K562 (cell line): ENCODE measurements at regions of chr22 and their contacts with region 1.

Region 1: DNA sequence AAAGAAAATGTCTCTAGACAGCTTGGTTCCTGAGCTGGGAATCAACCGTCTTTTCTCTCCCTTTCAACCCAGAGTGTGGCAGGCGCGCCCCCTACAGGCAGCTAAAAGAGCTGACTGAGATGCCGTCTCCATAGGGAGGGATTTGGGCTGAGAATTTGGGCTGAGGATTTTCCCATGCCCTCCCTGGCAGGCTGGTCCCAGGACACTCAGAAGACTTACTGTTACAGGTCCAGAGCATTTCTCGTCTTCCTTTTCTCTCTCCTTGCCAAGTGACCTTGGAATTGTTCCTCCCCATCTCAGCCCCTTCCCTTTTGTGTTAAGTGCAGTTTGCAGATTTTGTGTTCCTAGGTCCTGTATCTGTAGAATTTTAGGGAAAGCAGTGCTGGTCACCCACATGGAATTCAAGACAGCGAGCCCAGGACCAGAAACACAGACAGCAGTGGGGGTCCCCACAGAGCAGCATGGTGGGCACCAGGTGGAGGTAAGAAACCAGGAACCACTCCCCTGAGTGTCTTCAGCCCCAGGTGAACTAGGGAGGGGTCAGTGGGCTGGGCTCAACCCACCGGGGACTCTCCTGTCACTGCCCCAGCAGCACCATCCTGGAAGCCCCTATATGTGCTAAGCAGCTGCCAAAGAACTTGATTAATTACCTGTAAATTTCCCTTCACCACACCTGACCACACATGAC is 9.9 kb upstream of the IGLL5 start:
- DNase-seq: peak in 3 of 4 experiments; percentile 58 to 99 (median 98)
- ATAC-seq: peak; percentile 90
- H3K4me3 ChIP-seq: no peak overlapping the region
- H3K27ac ChIP-seq: no peak overlapping the region
- H3K4me1 ChIP-seq: peaks cover 0 to 3% of the 10 kb centered on the region in 2 experiments; a peak in 1 of 5 replicates
- H3K27me3 ChIP-seq: peaks cover 0 to 41% of the 10 kb centered on the region in 2 experiments; a peak in 2 of 5 replicates
- CTCF ChIP-seq: no peak
- EP300 ChIP-seq: no peak
- POLR2A ChIP-seq: no peak
- RAD21 ChIP-seq: no peak

Region 2: DNA sequence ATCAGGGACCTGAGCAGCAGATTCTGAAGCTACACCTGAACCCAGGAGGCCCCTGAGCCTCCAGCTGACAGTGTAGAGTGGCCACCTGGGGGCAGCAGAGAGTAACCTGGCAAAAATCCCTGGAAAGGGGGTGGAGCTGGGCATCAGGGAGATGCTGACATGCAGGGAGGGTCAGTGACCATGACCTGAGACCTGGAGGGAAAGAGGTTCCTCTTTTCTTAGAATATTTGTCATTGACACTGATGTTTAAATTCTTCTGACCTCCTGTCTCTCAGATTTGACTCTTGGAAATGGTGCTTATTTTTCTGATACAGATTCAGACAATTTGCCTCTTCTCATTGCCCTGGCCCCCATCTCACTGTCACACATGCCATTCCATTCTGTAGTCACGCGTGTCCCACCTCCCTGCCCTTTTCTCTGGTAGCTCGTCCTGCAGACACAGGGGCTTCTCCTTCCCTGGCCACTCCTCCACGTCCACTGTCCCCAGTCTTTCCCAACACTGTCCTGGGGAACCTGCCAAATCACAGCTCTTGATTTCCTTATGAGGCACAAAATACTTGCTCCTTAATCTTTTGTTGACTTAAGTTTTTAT is 107.3 kb before region 1 on chr22:
- CTCF ChIA-PET with region 1: interaction called, 17 read pairs
- POLR2A ChIA-PET with region 1: interaction called, 4 read pairs
- in situ Hi-C with region 1: no loop called
- intact Hi-C with region 1: loop called (anchors 1 kb)
- DNase-seq: peak; percentile 96 to 100 (median 98)
- ATAC-seq: peak; percentile 94
- H3K4me3 ChIP-seq: no peak overlapping the region
- H3K27ac ChIP-seq: no peak overlapping the region
- H3K4me1 ChIP-seq: no peaks in the 10 kb centered on the region
- H3K27me3 ChIP-seq: peaks cover 0 to 32% of the 10 kb centered on the region in 2 experiments; a peak in 2 of 5 replicates
- CTCF ChIP-seq: peak in 1 of 3 experiments; percentile 100; a peak in 2 of 6 replicates
- EP300 ChIP-seq: peak; percentile 71
- POLR2A ChIP-seq: no peak
- RAD21 ChIP-seq: no peak

Region 3: DNA sequence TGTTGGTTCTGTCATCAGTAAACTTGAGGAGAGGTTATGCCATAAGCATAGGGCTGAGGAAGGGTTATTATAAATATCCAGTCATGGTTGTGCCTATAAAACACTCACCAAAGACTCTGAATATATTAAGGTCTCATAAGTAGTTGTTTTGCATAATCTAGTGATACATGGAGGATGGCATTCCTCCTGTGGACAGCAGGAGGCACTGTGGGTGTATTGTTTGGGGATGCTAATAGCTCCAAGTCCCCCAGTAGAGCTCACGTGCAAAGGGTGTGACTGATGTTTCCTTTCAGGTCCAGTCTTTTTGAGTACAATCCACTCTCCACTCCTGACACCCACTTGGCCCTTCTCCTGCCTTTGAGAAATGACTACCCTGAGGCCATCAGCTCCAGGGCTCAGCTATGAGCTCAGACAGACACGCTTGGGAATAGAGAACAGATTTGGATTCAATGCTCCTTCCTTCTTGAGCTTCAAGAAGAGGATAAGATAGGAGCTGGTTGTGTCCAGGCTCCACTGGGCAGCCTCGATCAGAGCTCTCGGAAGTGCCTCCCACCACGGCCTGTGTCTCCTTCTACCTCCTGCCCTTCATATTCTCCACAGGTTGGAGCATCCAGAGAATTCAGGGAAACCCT is 75.2 kb before region 1 on chr22:
- CTCF ChIA-PET with region 1: interaction called, 251 read pairs
- POLR2A ChIA-PET with region 1: interaction called, 7 read pairs
- in situ Hi-C with region 1: no loop called
- intact Hi-C with region 1: loop called (anchors 1 kb)
- DNase-seq: peak; percentile 84 to 94 (median 91)
- ATAC-seq: peak; percentile 90
- H3K4me3 ChIP-seq: no peak overlapping the region
- H3K27ac ChIP-seq: no peak overlapping the region
- H3K4me1 ChIP-seq: no peaks in the 10 kb centered on the region
- H3K27me3 ChIP-seq: peaks cover 8 to 37% of the 10 kb centered on the region in 2 experiments; a peak in 3 of 5 replicates
- CTCF ChIP-seq: no peak
- EP300 ChIP-seq: no peak
- POLR2A ChIP-seq: no peak
- RAD21 ChIP-seq: no peak

Region 4: DNA sequence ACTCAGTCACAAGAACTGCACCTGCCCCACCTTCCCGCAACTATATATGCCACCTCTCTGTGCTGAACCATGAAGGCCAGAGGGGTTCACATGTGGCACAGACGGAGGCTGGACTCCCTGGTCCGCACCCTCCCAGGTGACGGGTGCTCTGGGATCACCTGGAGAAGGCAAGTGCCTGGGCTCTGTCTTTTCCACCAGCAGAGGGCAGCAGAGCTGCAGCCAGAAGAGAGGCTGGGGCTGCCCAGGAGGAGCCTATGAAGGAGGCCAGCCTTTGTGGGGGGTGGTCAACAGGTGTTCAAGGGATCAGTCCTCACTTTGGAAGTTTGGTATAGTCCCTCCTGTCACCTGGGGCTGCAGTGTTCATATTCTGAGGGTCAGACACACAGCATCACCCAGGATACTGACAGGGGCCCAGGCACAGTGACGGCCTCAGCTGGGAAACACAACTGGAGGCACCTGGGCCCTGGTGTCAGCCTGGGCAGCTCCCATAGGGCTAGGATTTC is 29.3 kb before region 1 on chr22:
- CTCF ChIA-PET with region 1: interaction called, 56 read pairs
- POLR2A ChIA-PET with region 1: interaction called, 7 read pairs
- in situ Hi-C with region 1: no loop called
- intact Hi-C with region 1: loop called (anchors 1 kb)
- DNase-seq: peak; percentile 94 to 100 (median 98)
- ATAC-seq: peak; percentile 98
- H3K4me3 ChIP-seq: no peak overlapping the region
- H3K27ac ChIP-seq: no peak overlapping the region
- H3K4me1 ChIP-seq: no peaks in the 10 kb centered on the region
- H3K27me3 ChIP-seq: peaks cover 0 to 8% of the 10 kb centered on the region in 2 experiments; a peak in 1 of 5 replicates
- CTCF ChIP-seq: no peak
- EP300 ChIP-seq: no peak
- POLR2A ChIP-seq: no peak
- RAD21 ChIP-seq: no peak

Region 5: GRCh38 chr22:22865311-22866072 is 12.2 kb before region 1 on chr22:
- CTCF ChIA-PET with region 1: interaction called, 8 read pairs
- POLR2A ChIA-PET with region 1: interaction called, 24 read pairs
- in situ Hi-C with region 1: no loop called
- intact Hi-C with region 1: no loop called
- DNase-seq: peak in 2 of 4 experiments; percentile 42 to 52
- ATAC-seq: no peak
- H3K4me3 ChIP-seq: no peak overlapping the region
- H3K27ac ChIP-seq: no peak overlapping the region
- H3K4me1 ChIP-seq: no peaks in the 10 kb centered on the region
- H3K27me3 ChIP-seq: peaks cover 0 to 20% of the 10 kb centered on the region in 2 experiments; a peak in 3 of 5 replicates
- CTCF ChIP-seq: no peak
- EP300 ChIP-seq: no peak
- POLR2A ChIP-seq: no peak
- RAD21 ChIP-seq: no peak